HEK293T (cell line): ENCODE measurements at regions of chr6 and their contacts with region 1.

Region 1: DNA sequence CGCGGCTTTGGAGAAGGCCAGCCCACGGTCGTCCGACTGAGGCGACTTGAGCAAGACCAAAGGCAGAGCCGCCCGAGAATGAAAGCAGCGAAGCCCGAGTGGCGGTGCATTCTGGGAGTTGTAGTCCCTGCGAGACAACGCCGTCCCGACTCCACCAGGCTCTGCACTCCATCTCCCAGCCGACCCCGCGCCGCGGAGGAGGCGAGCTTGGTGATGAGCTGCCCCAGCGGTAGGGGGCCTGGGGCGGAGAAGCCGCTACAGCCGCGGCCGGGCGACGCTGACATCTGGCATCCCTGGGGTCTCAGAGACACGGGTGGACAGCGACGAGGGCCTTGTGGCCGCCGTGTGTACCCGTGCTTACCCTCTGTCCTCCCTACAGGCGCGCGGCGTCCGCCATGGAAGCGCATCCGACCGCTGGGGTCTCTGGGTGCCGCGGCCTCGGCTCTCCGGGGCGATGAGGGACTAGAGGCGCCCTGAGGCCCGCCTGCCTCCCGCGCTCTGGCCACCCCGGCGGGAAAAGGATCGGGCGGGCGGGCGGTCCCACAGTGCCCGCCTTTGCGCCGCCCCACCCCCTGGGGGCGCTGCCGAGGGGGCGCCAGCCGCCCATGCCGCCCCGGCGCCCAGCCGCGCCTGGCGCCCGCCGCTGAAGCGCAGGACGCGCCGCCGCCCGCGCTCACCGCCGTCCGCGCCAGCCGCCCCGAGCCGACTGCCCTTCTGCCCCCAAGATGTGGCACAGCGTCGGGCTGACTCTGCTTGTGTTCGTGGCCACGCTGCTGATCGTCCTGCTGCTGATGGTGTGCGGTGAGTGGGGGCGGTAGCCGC is at the start of gene SMIM13:
- DNase-seq: peak; percentile 96

Region 2: GRCh38 chr6:11111769-11112437 is 18.1 kb after region 1 on chr6:
- CTCF ChIA-PET with region 1: no interaction called
- POLR2A ChIA-PET with region 1: interaction called, 12 read pairs
- DNase-seq: no peak

Region 3: GRCh38 chr6:11810039-11810541 is 716.3 kb after region 1 on chr6:
- CTCF ChIA-PET with region 1: no interaction called
- POLR2A ChIA-PET with region 1: no interaction called
- DNase-seq: peak; percentile 12